ENCODE measurements at regions of chr6 and their contacts with region 1.

Region 1: GRCh38 chr6:49531774-49532569 is 18.5 kb upstream of the C6orf141 start:
- DNase-seq: peak; percentile 91
- ATAC-seq: peak; percentile 91
- H3K4me3 ChIP-seq: peak overlapping the region; percentile 59
- H3K27ac ChIP-seq: peak overlapping the region; percentile 2; the same call in 1 of the 2 replicates
- H3K4me1 ChIP-seq: peaks cover 13% of the 10 kb centered on the region
- H3K27me3 ChIP-seq: no peaks in the 10 kb centered on the region
- CTCF ChIP-seq: peak; percentile 100

Region 2: DNA sequence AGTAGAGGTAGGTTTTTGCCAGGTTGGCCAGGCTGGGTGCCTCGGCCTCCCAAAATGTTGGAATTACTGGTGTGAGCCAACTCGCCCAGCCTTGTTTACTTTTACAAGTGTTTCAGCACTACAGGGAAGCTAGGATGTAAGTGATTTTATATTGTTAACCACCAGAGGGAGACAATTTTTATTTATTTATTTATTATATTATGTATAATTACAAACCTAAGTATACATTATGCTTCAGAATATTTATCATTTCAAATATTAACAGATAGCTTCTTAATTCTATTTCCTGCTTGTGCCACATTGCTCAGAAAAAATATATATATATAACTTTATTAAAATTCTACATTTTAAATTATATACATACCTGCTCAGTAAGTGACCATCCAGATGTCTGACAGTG is 78.8 kb before region 1 on chr6:
- CTCF ChIA-PET with region 1: no interaction called
- POLR2A ChIA-PET with region 1: interaction called, 13 read pairs
- intact Hi-C with region 1: no loop called
- DNase-seq: peak; percentile 55
- ATAC-seq: no peak; the same call in 1 of the 2 replicates
- H3K4me3 ChIP-seq: no peak overlapping the region
- H3K27ac ChIP-seq: no peak overlapping the region
- H3K4me1 ChIP-seq: no peaks in the 10 kb centered on the region
- H3K27me3 ChIP-seq: no peaks in the 10 kb centered on the region
- CTCF ChIP-seq: no peak; the same call in 1 of the 2 replicates

Region 3: DNA sequence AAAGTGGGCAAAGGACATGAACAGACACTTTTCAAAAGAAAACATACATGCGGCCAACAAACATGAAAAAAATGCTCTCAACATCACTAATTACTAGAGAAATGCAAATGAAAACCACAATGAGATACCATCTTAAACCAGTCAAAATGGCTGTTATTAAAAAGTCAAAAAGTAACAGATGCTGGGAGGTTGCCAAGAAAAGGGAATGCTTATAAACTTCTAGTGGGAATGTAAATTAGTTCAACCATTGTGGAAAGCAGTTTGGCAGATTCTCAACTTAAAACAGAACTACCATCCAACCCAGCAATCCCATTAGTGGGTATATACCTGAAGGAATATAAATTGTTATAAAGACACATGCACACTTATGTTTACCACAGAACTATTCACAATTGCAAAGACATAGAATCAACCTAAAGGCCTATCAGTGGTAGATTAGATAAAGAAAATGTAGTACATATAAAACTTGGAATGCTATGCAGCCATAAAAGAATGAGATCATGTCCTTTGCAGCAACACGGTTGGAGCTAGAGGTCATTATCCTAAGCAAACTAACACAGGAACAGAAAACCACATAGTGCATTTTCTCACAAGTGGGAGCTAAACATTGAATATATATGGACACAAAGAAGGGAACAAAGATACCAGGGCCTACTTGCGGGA is 52.5 kb before region 1 on chr6:
- CTCF ChIA-PET with region 1: no interaction called
- POLR2A ChIA-PET with region 1: no interaction called
- intact Hi-C with region 1: no loop called
- DNase-seq: no peak
- ATAC-seq: no peak
- H3K4me3 ChIP-seq: no peak overlapping the region
- H3K27ac ChIP-seq: no peak overlapping the region
- H3K4me1 ChIP-seq: no peaks in the 10 kb centered on the region
- H3K27me3 ChIP-seq: no peaks in the 10 kb centered on the region
- CTCF ChIP-seq: no peak

Region 4: DNA sequence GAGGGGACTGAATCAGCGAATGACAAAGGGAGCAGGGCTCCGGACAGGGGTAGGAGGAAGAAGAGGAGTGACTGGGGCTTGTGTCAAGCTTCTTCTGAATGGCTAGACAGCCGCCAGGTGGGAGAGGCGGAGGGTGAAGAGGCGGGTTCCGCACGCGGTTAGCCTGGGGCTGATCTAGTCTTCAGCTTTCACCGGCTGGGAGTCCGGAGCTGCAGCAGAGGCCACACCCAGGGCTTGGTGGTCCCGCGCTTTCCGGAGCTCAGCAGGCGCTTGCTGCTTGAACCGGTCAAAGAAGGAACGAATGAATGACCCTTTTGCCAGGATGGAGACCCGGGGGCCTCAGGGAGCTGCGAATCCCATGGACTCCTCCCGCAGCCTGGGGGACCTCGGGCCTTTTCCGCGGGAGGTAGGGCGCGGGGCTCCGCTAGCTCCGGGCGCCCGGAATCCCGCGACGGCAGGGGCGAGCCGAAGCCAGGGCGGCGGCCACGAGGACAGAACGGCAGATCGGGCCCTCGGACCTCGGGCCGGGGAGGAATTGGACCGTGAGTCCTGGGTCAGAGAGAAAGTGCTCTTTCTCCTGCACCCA is 18.6 kb after region 1 on chr6 and contains the start of gene C6orf141:
- CTCF ChIA-PET with region 1: interaction called, 20 read pairs
- POLR2A ChIA-PET with region 1: no interaction called
- intact Hi-C with region 1: no loop called
- DNase-seq: peak; percentile 94
- ATAC-seq: peak; percentile 87
- H3K4me3 ChIP-seq: peak within 1 kb of the TSS; percentile 90
- H3K27ac ChIP-seq: peak within 1 kb of the TSS; percentile 74
- H3K4me1 ChIP-seq: peaks cover 35% of the 10 kb centered on the region
- H3K27me3 ChIP-seq: no peaks in the 10 kb centered on the region
- CTCF ChIP-seq: no peak
- total RNA-seq, gene C6orf141: 43.8 and 49.4 TPM in 2 replicates

Region 5: GRCh38 chr6:49570474-49571079 is 38.6 kb after region 1 on chr6:
- CTCF ChIA-PET with region 1: interaction called, 11 read pairs
- POLR2A ChIA-PET with region 1: no interaction called
- intact Hi-C with region 1: loop called (anchors 1 kb)
- DNase-seq: peak; percentile 66
- ATAC-seq: peak; percentile 51
- H3K4me3 ChIP-seq: no peak overlapping the region
- H3K27ac ChIP-seq: no peak overlapping the region
- H3K4me1 ChIP-seq: peaks cover 17% of the 10 kb centered on the region
- H3K27me3 ChIP-seq: no peaks in the 10 kb centered on the region
- CTCF ChIP-seq: peak; percentile 69

Region 6: DNA sequence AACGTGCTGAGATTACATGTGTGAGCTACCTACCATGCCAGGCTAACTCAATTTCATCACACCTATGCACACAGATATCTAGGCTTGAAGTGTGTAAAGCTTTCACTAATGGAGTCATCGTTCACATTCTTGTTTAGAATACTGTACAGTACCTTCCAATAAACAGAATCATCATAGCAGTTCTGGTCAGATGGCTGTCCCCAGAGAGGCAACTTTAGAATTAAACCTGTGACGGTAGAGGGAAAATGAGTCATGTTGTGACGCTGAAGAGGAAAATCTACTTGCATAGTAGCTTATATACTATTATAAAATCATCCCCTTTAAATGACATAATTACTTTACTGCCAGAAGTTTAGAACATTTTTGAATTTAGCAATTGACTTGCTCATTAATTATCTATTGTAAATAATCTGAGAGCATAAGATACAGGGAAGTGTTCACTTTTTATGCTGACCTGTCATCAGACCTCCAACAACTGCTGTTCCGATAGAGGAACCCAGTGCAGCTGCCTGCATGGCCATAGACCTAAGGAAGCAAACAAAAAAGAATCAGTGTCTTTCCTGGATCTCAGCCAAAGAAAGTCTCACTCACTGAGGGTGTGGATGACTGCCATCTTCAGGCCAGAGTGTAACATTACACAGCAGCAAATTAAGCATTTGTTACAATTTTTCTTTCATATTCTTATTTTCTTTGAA is 74.9 kb after region 1 on chr6:
- CTCF ChIA-PET with region 1: interaction called, 29 read pairs
- POLR2A ChIA-PET with region 1: no interaction called
- intact Hi-C with region 1: loop called (anchors 1 kb)
- DNase-seq: peak; percentile 93
- ATAC-seq: peak; percentile 87
- H3K4me3 ChIP-seq: peak overlapping the region; percentile 22; the same call in 1 of the 2 replicates
- H3K27ac ChIP-seq: peak overlapping the region; percentile 16; the same call in 1 of the 2 replicates
- H3K4me1 ChIP-seq: 0 out of 2 replicates have a peak, but pooled peaks cover 9% of the 10 kb centered on the region
- H3K27me3 ChIP-seq: no peaks in the 10 kb centered on the region
- CTCF ChIP-seq: peak; percentile 96

Region 7: GRCh38 chr6:49625140-49625539 is 93.2 kb after region 1 on chr6:
- CTCF ChIA-PET with region 1: interaction called, 5 read pairs
- POLR2A ChIA-PET with region 1: no interaction called
- intact Hi-C with region 1: loop called (anchors 5 kb)
- DNase-seq: peak; percentile 39
- ATAC-seq: no peak
- H3K4me3 ChIP-seq: no peak overlapping the region
- H3K27ac ChIP-seq: no peak overlapping the region
- H3K4me1 ChIP-seq: peaks cover 6% of the 10 kb centered on the region; the same call in 1 of the 2 replicates
- H3K27me3 ChIP-seq: no peaks in the 10 kb centered on the region
- CTCF ChIP-seq: no peak

Region 8: GRCh38 chr6:49849213-49849907 is 317.4 kb after region 1 on chr6:
- CTCF ChIA-PET with region 1: interaction called, 7 read pairs
- POLR2A ChIA-PET with region 1: no interaction called
- intact Hi-C with region 1: loop called (anchors 1 kb)
- DNase-seq: peak; percentile 80
- ATAC-seq: peak; percentile 85
- H3K4me3 ChIP-seq: no peak overlapping the region
- H3K27ac ChIP-seq: no peak overlapping the region
- H3K4me1 ChIP-seq: no peaks in the 10 kb centered on the region
- H3K27me3 ChIP-seq: no peaks in the 10 kb centered on the region
- CTCF ChIP-seq: peak; percentile 77